ENCODE measurements at regions of chr7 and their contacts with region 1.

Region 1: DNA sequence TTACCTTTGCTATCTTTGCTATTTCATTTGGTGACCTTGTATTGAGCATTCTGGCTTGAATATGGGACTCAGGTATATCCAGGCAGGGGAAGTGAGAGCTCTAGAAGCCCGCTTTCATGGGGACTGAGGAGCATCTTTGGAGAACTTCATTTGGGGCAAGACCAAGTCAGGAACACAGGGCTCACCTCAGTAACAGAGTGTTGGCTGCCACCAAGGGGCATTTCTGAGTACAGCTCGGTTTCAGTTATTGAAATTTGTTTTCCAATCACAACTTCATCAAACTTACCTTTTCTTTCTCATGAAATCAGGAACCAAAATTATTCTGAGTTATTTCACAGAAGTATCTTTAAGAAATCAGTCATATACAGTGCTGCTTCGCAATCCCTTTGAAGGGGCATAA is 337.2 kb downstream of the C7orf25 start:
- DNase-seq: no peak
- H3K4me3 ChIP-seq: no peak overlapping the region
- H3K27ac ChIP-seq: no peak overlapping the region
- H3K4me1 ChIP-seq: no peaks in the 10 kb centered on the region
- H3K27me3 ChIP-seq: no peaks in the 10 kb centered on the region
- CTCF ChIP-seq: peak in 2 of 3 experiments; percentile 46 to 52; a peak in 3 of 4 replicates
- EP300 ChIP-seq: no peak
- POLR2A ChIP-seq: no peak
- RAD21 ChIP-seq: peak; percentile 73 to 78

Region 2: DNA sequence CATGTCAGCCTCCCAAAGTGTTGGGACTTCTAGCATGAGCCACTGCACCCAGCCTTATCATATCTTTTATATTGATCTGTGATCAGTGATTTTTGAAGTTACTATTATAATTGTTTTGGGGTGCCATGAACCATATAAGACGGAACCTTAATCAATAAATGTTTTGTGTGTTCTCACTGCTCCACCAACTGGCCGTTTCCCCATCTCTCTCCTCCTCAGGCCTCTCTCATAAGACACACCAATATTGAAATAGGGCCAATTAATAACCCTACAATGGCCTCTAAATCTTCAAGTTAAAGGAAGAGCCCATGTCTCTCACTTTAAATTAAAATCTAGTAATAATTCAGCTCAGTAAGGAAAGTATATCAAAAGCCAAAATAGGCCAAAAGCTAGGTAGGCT is 37.6 kb before region 1 on chr7:
- CTCF ChIA-PET with region 1: no interaction called
- POLR2A ChIA-PET with region 1: no interaction called
- DNase-seq: no peak
- H3K4me3 ChIP-seq: no peak overlapping the region
- H3K27ac ChIP-seq: no peak overlapping the region
- H3K4me1 ChIP-seq: no peaks in the 10 kb centered on the region
- H3K27me3 ChIP-seq: no peaks in the 10 kb centered on the region
- CTCF ChIP-seq: no peak
- EP300 ChIP-seq: no peak
- POLR2A ChIP-seq: no peak
- RAD21 ChIP-seq: peak in 1 of 2 experiments; percentile 14; a peak in 1 of 4 replicates

Region 3: DNA sequence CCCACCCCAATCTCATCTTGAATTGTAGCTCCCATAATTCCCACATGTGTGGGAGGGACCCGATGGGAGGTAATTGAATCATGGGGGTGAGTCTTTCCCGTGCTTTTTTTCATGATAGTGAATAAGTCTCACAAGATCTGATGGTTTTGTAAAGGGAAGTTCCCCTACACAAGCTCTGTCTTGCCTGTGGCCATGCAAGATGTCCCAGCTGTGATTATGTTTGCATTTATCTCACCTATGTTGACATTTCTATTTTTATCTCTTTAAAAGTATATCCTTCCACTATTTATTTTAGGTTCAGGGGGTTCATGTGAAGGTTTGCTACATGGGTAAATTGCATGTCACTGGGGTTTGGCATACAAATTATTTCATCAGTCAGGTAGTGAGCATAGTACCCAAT is 13.8 kb before region 1 on chr7:
- CTCF ChIA-PET with region 1: no interaction called
- POLR2A ChIA-PET with region 1: no interaction called
- DNase-seq: no peak
- H3K4me3 ChIP-seq: no peak overlapping the region
- H3K27ac ChIP-seq: no peak overlapping the region
- H3K4me1 ChIP-seq: no peaks in the 10 kb centered on the region
- H3K27me3 ChIP-seq: no peaks in the 10 kb centered on the region
- CTCF ChIP-seq: no peak
- EP300 ChIP-seq: no peak
- POLR2A ChIP-seq: no peak
- RAD21 ChIP-seq: no peak

Region 4: GRCh38 chr7:42590771-42591310 is 16.2 kb after region 1 on chr7:
- CTCF ChIA-PET with region 1: interaction called, 12 read pairs
- POLR2A ChIA-PET with region 1: no interaction called
- DNase-seq: no peak
- H3K4me3 ChIP-seq: no peak overlapping the region
- H3K27ac ChIP-seq: no peak overlapping the region
- H3K4me1 ChIP-seq: no peaks in the 10 kb centered on the region
- H3K27me3 ChIP-seq: peaks cover 0 to 1% (median 0%) of the 10 kb centered on the region in 4 experiments; a peak in 1 of 7 replicates
- CTCF ChIP-seq: no peak
- EP300 ChIP-seq: no peak
- POLR2A ChIP-seq: no peak
- RAD21 ChIP-seq: no peak